Adrenal gland (tissue), 19 donors: ENCODE measurements at regions of chr2 and their contacts with region 1.

Region 1: DNA sequence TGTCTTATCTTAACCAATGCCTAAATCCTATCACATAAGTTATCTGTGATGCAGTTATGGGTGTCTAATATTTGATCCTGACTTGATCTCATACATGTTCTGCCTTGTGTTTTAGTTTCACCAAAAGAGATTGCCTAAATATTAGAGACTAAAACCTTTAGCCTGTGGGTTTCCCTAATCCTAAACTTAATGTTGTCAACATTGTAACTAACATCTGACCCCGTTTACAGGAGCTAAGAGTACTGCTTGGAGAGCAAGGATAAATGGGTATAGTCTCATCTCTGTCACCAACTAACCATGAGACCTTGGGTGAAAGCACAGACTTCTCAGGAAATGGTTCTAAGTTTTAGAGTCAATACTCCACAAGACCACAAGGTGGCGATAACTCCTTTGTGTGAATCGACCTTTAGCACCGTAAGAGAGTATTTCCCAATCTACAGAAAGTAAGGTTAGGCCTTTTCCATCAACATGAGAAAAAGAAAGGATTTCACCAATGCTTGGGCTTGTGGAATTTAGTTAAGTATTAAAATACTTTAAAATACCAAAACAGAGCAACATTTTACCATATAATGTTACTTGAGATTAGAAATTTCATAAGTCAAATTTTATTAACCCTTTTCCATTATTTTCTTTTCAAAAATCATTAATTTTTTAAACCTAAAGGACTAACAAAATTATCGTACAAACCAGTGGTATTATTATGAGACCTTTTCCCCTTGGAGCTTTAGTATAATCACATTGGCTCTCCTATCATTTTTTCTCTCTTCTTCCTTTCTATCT is 60.5 kb downstream of the G6PC2 start:
- DNase-seq: peak in 6 of 7 donors; percentile 35 to 60 (median 56)
- H3K4me3 ChIP-seq: no peak overlapping the region
- H3K27ac ChIP-seq: no peak overlapping the region
- H3K4me1 ChIP-seq: no peaks in the 10 kb centered on the region
- H3K27me3 ChIP-seq: no peaks in the 10 kb centered on the region
- CTCF ChIP-seq: peak; percentile 66 to 88 (median 82)
- POLR2A ChIP-seq: no peak

Region 2: GRCh38 chr2:169141713-169142352 is 180.2 kb after region 1 on chr2:
- intact Hi-C with region 1: loop called in 1 of 2 experiments (anchors 5 kb)
- DNase-seq: peak; percentile 52 to 76 (median 64)
- H3K4me3 ChIP-seq: no peak overlapping the region
- H3K27ac ChIP-seq: no peak overlapping the region
- H3K4me1 ChIP-seq: no peaks in the 10 kb centered on the region
- H3K27me3 ChIP-seq: no peaks in the 10 kb centered on the region
- CTCF ChIP-seq: peak; percentile 61 to 75 (median 73)
- POLR2A ChIP-seq: no peak